ENCODE measurements at regions of chr10 and their contacts with region 1.

Region 1: DNA sequence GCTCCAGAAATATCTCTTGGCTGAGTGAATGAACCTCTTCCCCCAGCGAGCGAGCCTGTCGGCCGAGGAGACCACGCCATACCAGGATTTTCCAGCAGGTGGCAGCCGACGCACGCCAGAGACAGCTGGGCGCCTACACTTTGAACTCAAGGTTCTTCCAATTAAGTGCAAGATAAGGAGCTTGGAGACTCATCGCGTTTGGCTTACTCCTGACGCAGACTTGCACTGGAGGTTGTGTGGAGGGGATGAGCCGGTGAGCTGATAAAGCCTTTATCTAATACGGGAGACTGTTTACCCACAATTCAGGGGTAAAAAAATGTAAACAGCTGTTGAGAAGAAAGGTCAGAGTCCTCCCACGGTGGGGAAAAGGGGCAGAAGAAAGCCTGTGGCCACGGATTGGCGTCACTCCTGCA is 45.9 kb upstream of the EMX2 start:
- DNase-seq: peak; percentile 89
- ATAC-seq: peak; percentile 88

Region 2: GRCh38 chr10:118241229-118242137 is 744.9 kb after region 1 on chr10:
- intact Hi-C with region 1: loop called (anchors 2 kb)
- DNase-seq: peak; percentile 75
- ATAC-seq: peak; percentile 67

Region 3: GRCh38 chr10:118423800-118424479 is 927.3 kb after region 1 on chr10:
- intact Hi-C with region 1: loop called (anchors 5 kb)
- DNase-seq: peak; percentile 88
- ATAC-seq: peak; percentile 80

Region 4: DNA sequence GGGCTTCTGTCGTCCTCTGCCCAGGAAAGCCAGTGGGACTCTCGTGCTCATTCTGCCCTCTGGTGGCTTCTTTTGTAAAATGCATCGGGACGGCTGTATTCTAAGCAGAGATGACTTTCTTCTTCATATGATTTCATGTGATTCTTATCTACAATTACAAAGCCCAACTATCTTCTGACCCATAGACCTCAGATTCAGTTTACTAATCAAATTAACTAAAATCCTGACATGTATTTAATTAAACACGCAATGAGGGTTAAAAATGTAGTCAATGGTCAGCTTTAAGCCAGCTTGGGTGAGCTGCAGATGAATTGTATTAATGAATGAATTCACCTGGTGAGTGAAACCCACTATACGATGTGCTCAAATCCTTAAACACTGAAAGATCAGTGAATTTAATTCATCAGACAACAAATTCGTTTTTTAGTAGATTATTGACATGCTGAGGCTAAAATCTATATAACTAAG is 963.1 kb after region 1 on chr10:
- intact Hi-C with region 1: loop called (anchors 2 kb)
- DNase-seq: no peak
- ATAC-seq: peak; percentile 80

Measured in Right ventricle myocardium inferior (tissue), 1 donor.